Heart left ventricle (tissue), 16 donors: ENCODE measurements at regions of chr3 and their contacts with region 1.

Region 1: DNA sequence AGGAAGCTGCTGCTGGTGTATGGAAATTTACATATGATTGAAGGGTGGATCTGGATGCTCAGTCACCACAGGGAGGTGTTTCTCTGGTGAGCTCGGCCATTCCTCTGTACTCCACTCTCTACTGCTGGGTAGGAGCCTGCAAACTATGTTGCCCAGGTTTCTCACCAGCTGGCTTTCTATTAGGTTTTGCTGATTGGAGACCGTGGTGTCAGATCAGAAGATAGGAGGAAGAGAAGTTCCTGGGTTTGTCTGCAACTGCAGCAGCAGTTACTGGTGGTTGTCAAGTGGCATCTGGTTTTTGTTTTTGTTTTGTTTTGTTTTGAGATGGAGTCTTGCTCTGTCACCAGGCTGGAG is 61.7 kb downstream of the TAMM41 start:
- DNase-seq: no peak
- ATAC-seq: no peak
- H3K4me3 ChIP-seq: no peak overlapping the region
- H3K27ac ChIP-seq: no peak overlapping the region
- H3K4me1 ChIP-seq: no peaks in the 10 kb centered on the region
- H3K27me3 ChIP-seq: no peaks in the 10 kb centered on the region
- CTCF ChIP-seq: no peak
- POLR2A ChIP-seq: no peak

Region 2: GRCh38 chr3:11410564-11410963 is 374.4 kb before region 1 on chr3:
- intact Hi-C with region 1: no loop called
- DNase-seq: no peak
- ATAC-seq: no peak
- H3K4me3 ChIP-seq: no peak overlapping the region
- H3K27ac ChIP-seq: no peak overlapping the region
- H3K4me1 ChIP-seq: peaks cover 0 to 5% (median 0%) of the 10 kb centered on the region in 12 donors
- H3K27me3 ChIP-seq: no peaks in the 10 kb centered on the region
- CTCF ChIP-seq: no peak
- POLR2A ChIP-seq: no peak

Region 3: DNA sequence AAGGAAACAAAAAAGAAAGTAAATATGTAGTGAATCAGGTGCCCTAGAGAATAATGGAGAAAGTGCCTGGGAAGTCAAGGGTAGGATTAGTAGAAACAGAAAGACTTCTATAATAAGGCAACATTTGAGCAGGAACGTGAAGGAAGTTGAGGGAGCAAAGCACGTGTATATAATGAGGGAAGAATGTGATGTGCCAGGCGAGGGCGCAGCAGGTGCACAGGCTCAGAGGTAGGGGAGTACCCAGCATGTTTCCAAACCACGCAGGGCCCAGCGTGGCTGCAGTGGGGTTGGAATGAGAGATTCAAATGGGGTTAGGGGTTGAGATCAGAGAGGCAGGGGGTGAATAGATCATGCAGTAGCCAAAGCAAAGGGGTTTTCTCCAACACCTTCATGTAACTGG is 49.4 kb before region 1 on chr3:
- intact Hi-C with region 1: loop called in 1 of 10 experiments (anchors 10 kb)
- DNase-seq: no peak
- ATAC-seq: no peak
- H3K4me3 ChIP-seq: no peak overlapping the region
- H3K27ac ChIP-seq: no peak overlapping the region
- H3K4me1 ChIP-seq: no peaks in the 10 kb centered on the region
- H3K27me3 ChIP-seq: no peaks in the 10 kb centered on the region
- CTCF ChIP-seq: no peak
- POLR2A ChIP-seq: no peak

Region 4: GRCh38 chr3:11764931-11765363 is 20.1 kb before region 1 on chr3:
- intact Hi-C with region 1: no loop called
- DNase-seq: no peak
- ATAC-seq: no peak
- H3K4me3 ChIP-seq: no peak overlapping the region
- H3K27ac ChIP-seq: no peak overlapping the region
- H3K4me1 ChIP-seq: peaks cover 0 to 1% (median 0%) of the 10 kb centered on the region in 12 donors
- H3K27me3 ChIP-seq: no peaks in the 10 kb centered on the region
- CTCF ChIP-seq: no peak
- POLR2A ChIP-seq: no peak